CD4-positive, alpha-beta T cell (primary cell): ENCODE measurements at regions of chr3 and their contacts with region 1.

Region 1: GRCh38 chr3:32296256-32297204 is 58.0 kb downstream of the CMTM8 start:
- DNase-seq: peak; percentile 52 to 88 (median 60)
- ATAC-seq: peak; percentile 62
- H3K4me3 ChIP-seq: no peak overlapping the region
- H3K4me3 Mint-ChIP-seq: peak overlapping the region; percentile 76
- H3K27ac ChIP-seq: peak overlapping the region; percentile 60
- H3K27ac Mint-ChIP-seq: peak overlapping the region; percentile 93
- H3K4me1 ChIP-seq: peaks cover 44% of the 10 kb centered on the region
- H3K4me1 Mint-ChIP-seq: peaks cover 43% of the 10 kb centered on the region
- H3K27me3 ChIP-seq: no peaks in the 10 kb centered on the region
- H3K27me3 Mint-ChIP-seq: no peaks in the 10 kb centered on the region
- CTCF ChIP-seq: peak; percentile 93

Region 2: DNA sequence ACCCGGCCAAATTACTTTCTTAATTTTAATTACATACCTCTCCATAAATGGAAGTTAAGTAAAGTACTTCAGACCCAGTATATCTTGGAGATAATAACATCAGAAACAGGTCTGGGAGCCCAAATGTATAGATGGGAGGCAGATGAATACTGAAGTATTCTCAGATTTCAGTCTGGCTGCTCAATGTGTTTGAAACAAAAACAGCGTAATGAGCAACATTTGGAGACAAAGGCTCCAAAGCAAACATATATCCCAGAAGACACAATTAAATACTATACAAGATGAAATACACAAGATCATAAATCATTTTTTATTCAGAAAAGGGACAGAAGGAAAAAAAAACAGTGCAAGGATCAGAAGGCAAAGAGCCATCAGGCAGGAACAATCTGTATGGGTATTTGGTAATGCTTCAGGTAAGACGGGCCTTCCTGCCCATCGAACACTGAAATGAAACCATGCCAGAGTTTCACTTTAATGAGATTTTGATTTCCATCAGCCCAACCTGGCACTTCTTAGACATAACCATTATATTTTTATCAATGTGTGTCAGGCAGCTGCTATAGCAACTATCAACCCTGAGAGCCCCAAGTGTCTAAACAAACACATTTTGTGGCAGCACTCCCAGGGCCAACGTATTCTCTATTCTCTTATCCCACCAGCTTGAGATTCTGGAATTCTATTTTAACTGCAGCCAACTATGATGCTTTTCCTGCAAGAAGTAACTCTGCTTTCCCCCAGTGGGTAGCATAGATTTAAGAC is 553.0 kb before region 1 on chr3:
- CTCF ChIA-PET with region 1: no interaction called
- POLR2A ChIA-PET with region 1: no interaction called
- intact Hi-C with region 1: no loop called
- DNase-seq: no peak
- ATAC-seq: no peak
- H3K4me3 ChIP-seq: no peak overlapping the region
- H3K4me3 Mint-ChIP-seq: no peak overlapping the region
- H3K27ac ChIP-seq: no peak overlapping the region
- H3K27ac Mint-ChIP-seq: no peak overlapping the region
- H3K4me1 ChIP-seq: no peaks in the 10 kb centered on the region
- H3K4me1 Mint-ChIP-seq: no peaks in the 10 kb centered on the region
- H3K27me3 ChIP-seq: no peaks in the 10 kb centered on the region
- H3K27me3 Mint-ChIP-seq: no peaks in the 10 kb centered on the region
- CTCF ChIP-seq: no peak

Region 3: GRCh38 chr3:32334675-32335074 is 38.1 kb after region 1 on chr3:
- CTCF ChIA-PET with region 1: interaction called, 13 read pairs
- POLR2A ChIA-PET with region 1: interaction called, 9 read pairs
- intact Hi-C with region 1: loop called (anchors 1 to 2 kb)
- DNase-seq: peak; percentile 50 to 78 (median 67)
- ATAC-seq: peak; percentile 90
- H3K4me3 ChIP-seq: no peak overlapping the region
- H3K4me3 Mint-ChIP-seq: peak overlapping the region; percentile 54
- H3K27ac ChIP-seq: peak overlapping the region; percentile 27 to 40
- H3K27ac Mint-ChIP-seq: peak overlapping the region; percentile 96
- H3K4me1 ChIP-seq: peaks cover 38% of the 10 kb centered on the region
- H3K4me1 Mint-ChIP-seq: peaks cover 67% of the 10 kb centered on the region
- H3K27me3 ChIP-seq: no peaks in the 10 kb centered on the region
- H3K27me3 Mint-ChIP-seq: no peaks in the 10 kb centered on the region
- CTCF ChIP-seq: peak; percentile 65

Region 4: DNA sequence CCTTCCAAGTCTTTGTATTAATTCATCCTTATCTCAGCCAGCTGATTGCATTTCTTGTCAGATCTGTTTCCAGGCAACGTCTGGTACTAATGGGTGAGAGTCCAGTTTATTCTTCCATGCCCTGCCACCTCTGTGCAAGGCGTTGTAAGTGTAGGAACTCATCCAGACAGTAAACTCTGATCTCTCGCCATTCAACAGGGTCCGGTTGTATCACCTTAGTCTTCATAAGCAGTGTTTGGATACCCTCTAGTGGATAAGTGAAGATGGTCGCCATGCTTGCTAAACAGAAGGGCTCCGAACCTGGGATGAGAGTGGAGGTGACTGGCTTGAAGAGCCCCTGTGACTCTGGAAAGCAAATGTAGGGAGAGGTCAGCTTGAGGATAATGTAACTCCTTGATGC is 43.5 kb after region 1 on chr3:
- CTCF ChIA-PET with region 1: interaction called, 13 read pairs
- POLR2A ChIA-PET with region 1: interaction called, 7 read pairs
- intact Hi-C with region 1: loop called (anchors 1 to 2 kb)
- DNase-seq: peak in 9 of 14 experiments; percentile 12 to 74 (median 28)
- ATAC-seq: peak; percentile 80
- H3K4me3 ChIP-seq: no peak overlapping the region
- H3K4me3 Mint-ChIP-seq: no peak overlapping the region
- H3K27ac ChIP-seq: no peak overlapping the region
- H3K27ac Mint-ChIP-seq: no peak overlapping the region
- H3K4me1 ChIP-seq: peaks cover 26% of the 10 kb centered on the region
- H3K4me1 Mint-ChIP-seq: peaks cover 35% of the 10 kb centered on the region
- H3K27me3 ChIP-seq: no peaks in the 10 kb centered on the region
- H3K27me3 Mint-ChIP-seq: no peaks in the 10 kb centered on the region
- CTCF ChIP-seq: peak; percentile 64

Region 5: DNA sequence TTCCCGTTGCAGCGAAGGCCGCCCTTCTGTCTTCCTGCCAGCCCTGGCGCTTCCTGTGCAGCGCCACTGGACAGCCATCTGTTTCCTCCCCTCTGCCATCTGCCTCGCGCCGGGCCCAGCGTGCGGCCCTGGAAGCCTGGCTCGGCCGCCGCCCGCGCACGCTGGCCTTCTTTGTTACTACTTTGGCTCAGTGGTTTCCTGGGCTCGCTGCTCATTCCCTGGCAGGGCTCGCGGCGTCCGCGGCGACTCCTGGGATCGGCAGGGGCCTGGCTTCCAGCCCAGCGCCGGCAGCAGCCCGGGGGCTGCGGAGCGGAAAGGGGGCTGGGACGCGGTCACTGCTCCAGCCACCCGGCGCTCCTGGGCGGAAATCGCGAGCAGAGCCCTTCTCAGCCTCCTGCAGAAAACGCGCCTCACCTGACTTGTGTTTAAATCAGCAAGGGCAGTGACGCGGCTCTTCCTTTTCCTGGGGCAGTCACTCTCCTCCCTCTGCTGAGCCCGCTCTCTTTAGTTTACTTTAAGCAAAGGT is 105.1 kb after region 1 on chr3:
- CTCF ChIA-PET with region 1: no interaction called
- POLR2A ChIA-PET with region 1: no interaction called
- intact Hi-C with region 1: loop called (anchors 2 to 5 kb)
- DNase-seq: peak; percentile 37 to 84 (median 58)
- ATAC-seq: peak; percentile 73
- H3K4me3 ChIP-seq: peak overlapping the region; percentile 65
- H3K4me3 Mint-ChIP-seq: peak overlapping the region; percentile 92
- H3K27ac ChIP-seq: peak overlapping the region; percentile 85 to 92
- H3K27ac Mint-ChIP-seq: peak overlapping the region; percentile 90
- H3K4me1 ChIP-seq: peaks cover 62% of the 10 kb centered on the region
- H3K4me1 Mint-ChIP-seq: peaks cover 77% of the 10 kb centered on the region
- H3K27me3 ChIP-seq: no peaks in the 10 kb centered on the region
- H3K27me3 Mint-ChIP-seq: no peaks in the 10 kb centered on the region
- CTCF ChIP-seq: no peak